ENCODE measurements at regions of chr7 and their contacts with region 1.

Region 1: DNA sequence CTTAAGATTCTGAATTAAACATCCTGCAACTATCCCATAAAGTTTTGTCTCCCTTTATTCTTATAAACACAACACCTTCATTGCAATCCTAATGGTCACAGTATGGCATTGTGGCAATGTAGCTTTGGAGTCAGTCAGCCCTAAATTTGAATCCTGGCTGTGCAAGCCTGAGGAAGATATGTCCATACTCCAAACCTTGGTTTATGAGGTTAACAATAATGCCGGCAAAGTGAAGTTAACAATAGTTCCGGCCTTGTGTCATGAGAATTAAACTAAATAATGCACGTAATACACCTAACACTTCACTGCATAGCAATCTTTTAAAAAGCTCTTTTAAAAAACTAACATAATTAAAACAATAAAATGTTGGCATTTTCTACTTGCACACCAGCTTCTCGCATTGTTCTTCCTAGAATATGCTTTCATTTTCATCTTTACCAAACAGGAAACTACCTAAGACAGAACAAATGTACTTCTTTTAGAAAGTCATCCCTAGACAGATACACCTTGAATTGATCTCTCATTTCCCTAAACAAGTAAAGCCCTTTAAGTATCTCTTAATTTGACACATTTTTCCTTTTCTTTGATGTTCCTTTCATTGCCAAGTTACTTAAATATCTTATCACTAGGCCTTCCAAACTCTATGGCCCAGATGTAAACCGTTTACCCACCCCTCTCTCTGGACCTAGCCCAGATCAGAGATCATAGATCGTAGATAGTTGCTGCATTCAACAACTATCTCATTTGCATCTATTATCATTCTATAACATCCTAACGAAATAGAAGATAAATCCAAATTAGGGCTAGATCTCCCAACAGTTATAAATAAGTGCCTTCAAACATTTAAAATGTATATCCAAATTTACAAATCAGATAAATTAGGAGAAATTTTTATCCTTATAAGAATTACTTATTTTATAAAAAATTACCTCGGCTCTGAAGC is 66.7 kb downstream of the CREB3L2 start:
- DNase-seq: no peak
- H3K4me3 ChIP-seq: peak overlapping the region in 3 of 4 donors; percentile 1 to 25 (median 14)
- H3K27ac ChIP-seq: peak overlapping the region; percentile 55 to 81 (median 70)
- H3K4me1 ChIP-seq: peaks cover 55 to 85% (median 75%) of the 10 kb centered on the region in 4 donors
- H3K27me3 ChIP-seq: no peaks in the 10 kb centered on the region
- CTCF ChIP-seq: no peak
- EP300 ChIP-seq: no peak
- POLR2A ChIP-seq: no peak

Region 2: GRCh38 chr7:138002096-138002827 is 67.0 kb after region 1 on chr7:
- intact Hi-C with region 1: loop called (anchors 5 kb)
- DNase-seq: peak; percentile 100
- H3K4me3 ChIP-seq: peak overlapping the region; percentile 73 to 95 (median 86)
- H3K27ac ChIP-seq: peak overlapping the region; percentile 93 to 98 (median 94)
- H3K4me1 ChIP-seq: peaks cover 22 to 45% (median 36%) of the 10 kb centered on the region in 4 donors
- H3K27me3 ChIP-seq: no peaks in the 10 kb centered on the region
- CTCF ChIP-seq: peak; percentile 87 to 92 (median 90)
- EP300 ChIP-seq: no peak
- POLR2A ChIP-seq: no peak

Region 3: GRCh38 chr7:138077809-138078208 is 142.6 kb after region 1 on chr7:
- intact Hi-C with region 1: no loop called
- DNase-seq: no peak
- H3K4me3 ChIP-seq: no peak overlapping the region
- H3K27ac ChIP-seq: no peak overlapping the region
- H3K4me1 ChIP-seq: no peaks in the 10 kb centered on the region
- H3K27me3 ChIP-seq: no peaks in the 10 kb centered on the region
- CTCF ChIP-seq: no peak
- EP300 ChIP-seq: no peak
- POLR2A ChIP-seq: no peak